ENCODE measurements at regions of chr11 and their contacts with region 1.

Region 1: DNA sequence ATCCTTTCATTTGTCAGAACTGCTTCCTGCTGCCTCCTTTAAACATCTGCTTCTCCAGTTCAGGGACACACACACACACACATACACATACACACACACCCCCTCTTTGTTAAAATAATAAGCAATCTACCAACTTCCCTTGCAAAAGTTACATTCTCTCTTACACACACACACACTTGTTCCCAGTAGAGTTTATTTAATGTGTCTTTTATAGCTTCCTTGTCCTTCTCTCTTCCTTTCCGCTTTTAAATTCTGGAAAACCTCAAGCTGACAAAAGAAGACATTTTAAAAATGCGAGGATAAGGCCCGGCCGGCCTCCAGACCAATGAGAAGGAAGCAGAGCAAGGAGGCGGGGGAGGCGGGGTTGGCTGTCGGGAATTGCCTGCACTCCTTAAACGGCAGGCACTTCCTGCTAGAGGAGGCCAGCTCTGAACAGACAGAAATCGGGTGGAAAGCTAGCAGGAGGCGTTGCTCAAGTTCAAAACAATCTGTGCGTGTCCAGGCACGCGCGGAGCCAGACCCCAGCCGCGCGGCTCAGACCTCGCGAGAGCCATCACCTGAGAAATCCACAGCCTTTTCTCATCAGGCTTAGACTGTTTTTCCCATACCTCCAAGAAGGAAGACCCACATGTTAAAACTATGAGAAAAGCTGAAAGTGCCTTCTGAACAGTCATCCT is 99.9 kb downstream of the MAML2 start:
- DNase-seq: peak; percentile 51
- ATAC-seq: peak; percentile 87
- H3K4me3 Mint-ChIP-seq: peak overlapping the region; percentile 90
- H3K27ac Mint-ChIP-seq: peak overlapping the region; percentile 95
- H3K4me1 Mint-ChIP-seq: peaks cover 53% of the 10 kb centered on the region
- H3K27me3 Mint-ChIP-seq: no peaks in the 10 kb centered on the region
- CTCF ChIP-seq: no peak

Region 2: DNA sequence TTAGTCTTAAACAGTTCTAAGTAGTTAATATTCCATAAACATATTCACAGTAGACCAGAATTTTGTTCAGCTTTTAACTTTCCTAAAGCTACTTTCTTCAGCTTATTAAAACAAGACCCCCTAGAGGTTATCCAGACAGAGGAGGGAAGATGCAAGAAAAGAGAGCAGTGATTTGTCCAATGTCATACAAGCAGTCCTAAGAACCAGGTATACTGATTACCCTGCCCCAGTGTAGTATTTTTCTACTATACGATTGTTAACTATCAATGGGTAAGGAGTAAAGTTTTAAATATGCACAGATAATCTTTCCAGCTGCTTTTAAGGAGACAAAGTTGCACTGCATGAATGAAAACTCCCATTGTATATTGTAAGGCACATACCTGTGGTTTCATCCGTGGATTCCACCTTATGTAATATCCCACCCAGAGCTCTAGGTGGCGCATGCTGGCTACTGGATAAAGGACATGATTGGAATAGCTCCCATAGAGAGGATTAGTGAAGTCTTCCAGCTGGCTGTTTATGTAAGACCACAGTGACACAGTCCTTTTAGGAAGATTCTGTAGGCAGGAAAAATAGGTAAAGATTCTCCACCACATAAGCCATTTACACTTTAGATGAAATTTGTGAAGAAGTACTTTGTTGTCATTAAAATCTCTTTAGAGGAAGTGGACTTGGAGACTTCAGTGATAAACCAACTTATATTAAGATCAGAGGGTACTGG is 407.2 kb before region 1 on chr11:
- CTCF ChIA-PET with region 1: no interaction called
- POLR2A ChIA-PET with region 1: no interaction called
- intact Hi-C with region 1: loop called (anchors 5 kb)
- DNase-seq: no peak
- ATAC-seq: peak; percentile 87
- H3K4me3 Mint-ChIP-seq: no peak overlapping the region
- H3K27ac Mint-ChIP-seq: no peak overlapping the region
- H3K4me1 Mint-ChIP-seq: peaks cover 2% of the 10 kb centered on the region
- H3K27me3 Mint-ChIP-seq: no peaks in the 10 kb centered on the region
- CTCF ChIP-seq: no peak

Region 3: DNA sequence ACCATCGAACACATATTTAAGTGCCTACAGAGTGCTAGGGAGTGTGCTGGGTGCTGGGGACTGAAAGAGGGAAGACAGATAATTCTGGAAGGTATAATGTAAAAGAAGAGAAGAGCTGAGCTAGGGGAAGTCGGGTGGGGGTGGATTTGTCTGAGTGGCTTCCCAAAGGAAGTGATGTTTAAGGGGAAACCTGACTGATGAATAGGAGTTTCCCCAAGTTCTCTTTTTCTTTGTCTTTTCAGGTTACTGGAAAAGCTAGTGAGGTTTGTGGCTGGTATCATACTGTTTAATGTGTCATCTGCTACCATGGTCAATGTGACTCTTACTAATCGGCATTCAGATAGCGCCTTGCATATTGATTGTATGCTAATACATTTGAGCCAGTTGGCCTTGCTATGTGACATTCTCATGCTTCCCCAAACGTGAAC is 167.6 kb before region 1 on chr11:
- CTCF ChIA-PET with region 1: no interaction called
- POLR2A ChIA-PET with region 1: no interaction called
- intact Hi-C with region 1: loop called (anchors 5 kb)
- DNase-seq: no peak
- ATAC-seq: peak; percentile 81
- H3K4me3 Mint-ChIP-seq: peak overlapping the region; percentile 66
- H3K27ac Mint-ChIP-seq: peak overlapping the region; percentile 83
- H3K4me1 Mint-ChIP-seq: peaks cover 44% of the 10 kb centered on the region
- H3K27me3 Mint-ChIP-seq: no peaks in the 10 kb centered on the region
- CTCF ChIP-seq: no peak

Region 4: GRCh38 chr11:96254087-96254486 is 11.0 kb after region 1 on chr11:
- CTCF ChIA-PET with region 1: interaction called, 4 read pairs
- POLR2A ChIA-PET with region 1: interaction called, 56 read pairs
- intact Hi-C with region 1: loop called (anchors 1 kb)
- DNase-seq: no peak
- ATAC-seq: no peak
- H3K4me3 Mint-ChIP-seq: peak overlapping the region; percentile 73
- H3K27ac Mint-ChIP-seq: peak overlapping the region; percentile 99
- H3K4me1 Mint-ChIP-seq: peaks cover 82% of the 10 kb centered on the region
- H3K27me3 Mint-ChIP-seq: no peaks in the 10 kb centered on the region
- CTCF ChIP-seq: no peak

Region 5: GRCh38 chr11:96273507-96273906 is 30.4 kb after region 1 on chr11:
- CTCF ChIA-PET with region 1: no interaction called
- POLR2A ChIA-PET with region 1: no interaction called
- intact Hi-C with region 1: no loop called
- DNase-seq: no peak
- ATAC-seq: no peak
- H3K4me3 Mint-ChIP-seq: no peak overlapping the region
- H3K27ac Mint-ChIP-seq: no peak overlapping the region
- H3K4me1 Mint-ChIP-seq: peaks cover 30% of the 10 kb centered on the region
- H3K27me3 Mint-ChIP-seq: no peaks in the 10 kb centered on the region
- CTCF ChIP-seq: no peak

Region 6: GRCh38 chr11:96715208-96715607 is 472.1 kb after region 1 on chr11:
- CTCF ChIA-PET with region 1: no interaction called
- POLR2A ChIA-PET with region 1: no interaction called
- intact Hi-C with region 1: no loop called
- DNase-seq: no peak
- ATAC-seq: no peak
- H3K4me3 Mint-ChIP-seq: no peak overlapping the region
- H3K27ac Mint-ChIP-seq: no peak overlapping the region
- H3K4me1 Mint-ChIP-seq: no peaks in the 10 kb centered on the region
- H3K27me3 Mint-ChIP-seq: no peaks in the 10 kb centered on the region
- CTCF ChIP-seq: no peak

Region 7: DNA sequence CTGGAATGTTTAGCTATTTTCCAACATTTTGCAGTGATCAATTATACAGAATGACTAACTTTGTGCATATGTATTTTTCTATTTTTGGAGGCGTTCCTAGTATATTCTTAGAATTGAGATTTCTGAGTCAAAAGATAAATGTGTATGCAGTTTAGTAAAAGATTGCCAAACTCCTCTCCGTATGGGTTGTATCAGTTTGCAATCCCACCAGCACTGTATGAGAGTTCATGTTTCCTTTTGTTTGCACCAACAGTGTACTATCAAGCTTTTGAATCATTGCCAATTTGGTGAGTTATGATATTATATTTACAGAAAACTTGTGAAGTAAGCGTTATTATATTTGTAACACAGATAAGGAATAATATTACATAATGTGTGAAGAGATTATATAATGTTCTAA is 805.4 kb after region 1 on chr11:
- CTCF ChIA-PET with region 1: no interaction called
- POLR2A ChIA-PET with region 1: no interaction called
- intact Hi-C with region 1: no loop called
- DNase-seq: no peak
- ATAC-seq: no peak
- H3K4me3 Mint-ChIP-seq: no peak overlapping the region
- H3K27ac Mint-ChIP-seq: no peak overlapping the region
- H3K4me1 Mint-ChIP-seq: no peaks in the 10 kb centered on the region
- H3K27me3 Mint-ChIP-seq: no peaks in the 10 kb centered on the region
- CTCF ChIP-seq: no peak